CD8-positive, alpha-beta memory T cell (primary cell): ENCODE measurements at regions of chr5 and their contacts with region 1.

Region 1: GRCh38 chr5:148957591-148958202 is 105.2 kb downstream of the SH3TC2 start:
- DNase-seq: peak; percentile 32 to 66 (median 46)
- H3K4me3 ChIP-seq: no peak overlapping the region
- H3K4me3 Mint-ChIP-seq: no peak overlapping the region
- H3K27ac ChIP-seq: no peak overlapping the region
- H3K27ac Mint-ChIP-seq: peak overlapping the region in 3 of 8 donors; percentile 30 to 85 (median 52)
- H3K4me1 ChIP-seq: no peaks in the 10 kb centered on the region
- H3K4me1 Mint-ChIP-seq: peaks cover 5 to 9% (median 8%) of the 10 kb centered on the region in 3 donors
- H3K27me3 ChIP-seq: no peaks in the 10 kb centered on the region
- H3K27me3 Mint-ChIP-seq: no peaks in the 10 kb centered on the region

Region 2: GRCh38 chr5:148641735-148642134 is 316.0 kb before region 1 on chr5:
- CTCF ChIA-PET with region 1: no interaction called
- POLR2A ChIA-PET with region 1: no interaction called
- DNase-seq: no peak
- H3K4me3 ChIP-seq: no peak overlapping the region
- H3K4me3 Mint-ChIP-seq: no peak overlapping the region
- H3K27ac ChIP-seq: no peak overlapping the region
- H3K27ac Mint-ChIP-seq: no peak overlapping the region
- H3K4me1 ChIP-seq: no peaks in the 10 kb centered on the region
- H3K4me1 Mint-ChIP-seq: no peaks in the 10 kb centered on the region
- H3K27me3 ChIP-seq: no peaks in the 10 kb centered on the region
- H3K27me3 Mint-ChIP-seq: peaks cover 6 to 47% of the 10 kb centered on the region in 2 donors

Region 3: DNA sequence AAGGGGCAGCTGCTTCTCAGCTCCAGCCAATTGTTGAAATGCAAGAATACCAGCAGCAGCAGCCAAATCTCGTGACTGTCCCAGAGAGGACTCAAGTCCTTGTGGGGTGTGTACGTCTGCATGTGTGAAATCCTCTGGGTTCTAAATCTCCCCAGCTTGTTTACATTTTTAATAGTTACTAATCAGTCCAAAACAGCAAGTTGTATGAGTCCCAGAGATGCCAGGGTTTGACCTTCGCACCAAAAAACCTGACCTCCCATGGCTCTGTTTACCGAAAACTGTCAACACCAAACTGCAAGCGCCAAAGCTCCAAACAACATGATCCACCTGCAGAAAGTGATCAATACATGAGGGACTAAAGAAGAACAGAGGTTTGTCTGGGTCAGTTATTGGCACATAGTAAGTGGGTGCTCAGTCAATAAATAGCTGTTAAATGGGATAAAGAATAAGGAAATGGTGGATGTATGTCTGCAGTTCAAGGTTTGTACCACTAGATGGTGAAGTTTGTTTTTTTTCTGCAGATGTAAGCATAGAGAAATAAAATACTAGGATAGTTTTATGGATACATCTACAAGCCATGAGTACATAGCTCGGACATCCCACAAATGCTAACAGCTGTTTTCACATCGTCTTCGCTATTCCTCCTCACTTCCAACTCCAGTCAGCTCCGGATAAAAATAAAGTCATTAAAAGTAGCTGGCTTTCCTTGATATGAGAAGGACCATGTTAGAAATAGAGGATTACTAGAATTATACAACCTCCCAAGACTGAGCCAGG is 216.5 kb before region 1 on chr5:
- CTCF ChIA-PET with region 1: interaction called, 71 read pairs
- POLR2A ChIA-PET with region 1: no interaction called
- DNase-seq: peak in 2 of 5 donors; percentile 16 to 27
- H3K4me3 ChIP-seq: no peak overlapping the region
- H3K4me3 Mint-ChIP-seq: no peak overlapping the region
- H3K27ac ChIP-seq: no peak overlapping the region
- H3K27ac Mint-ChIP-seq: no peak overlapping the region
- H3K4me1 ChIP-seq: no peaks in the 10 kb centered on the region
- H3K4me1 Mint-ChIP-seq: no peaks in the 10 kb centered on the region
- H3K27me3 ChIP-seq: no peaks in the 10 kb centered on the region
- H3K27me3 Mint-ChIP-seq: peaks cover 11 to 30% of the 10 kb centered on the region in 2 donors

Region 4: DNA sequence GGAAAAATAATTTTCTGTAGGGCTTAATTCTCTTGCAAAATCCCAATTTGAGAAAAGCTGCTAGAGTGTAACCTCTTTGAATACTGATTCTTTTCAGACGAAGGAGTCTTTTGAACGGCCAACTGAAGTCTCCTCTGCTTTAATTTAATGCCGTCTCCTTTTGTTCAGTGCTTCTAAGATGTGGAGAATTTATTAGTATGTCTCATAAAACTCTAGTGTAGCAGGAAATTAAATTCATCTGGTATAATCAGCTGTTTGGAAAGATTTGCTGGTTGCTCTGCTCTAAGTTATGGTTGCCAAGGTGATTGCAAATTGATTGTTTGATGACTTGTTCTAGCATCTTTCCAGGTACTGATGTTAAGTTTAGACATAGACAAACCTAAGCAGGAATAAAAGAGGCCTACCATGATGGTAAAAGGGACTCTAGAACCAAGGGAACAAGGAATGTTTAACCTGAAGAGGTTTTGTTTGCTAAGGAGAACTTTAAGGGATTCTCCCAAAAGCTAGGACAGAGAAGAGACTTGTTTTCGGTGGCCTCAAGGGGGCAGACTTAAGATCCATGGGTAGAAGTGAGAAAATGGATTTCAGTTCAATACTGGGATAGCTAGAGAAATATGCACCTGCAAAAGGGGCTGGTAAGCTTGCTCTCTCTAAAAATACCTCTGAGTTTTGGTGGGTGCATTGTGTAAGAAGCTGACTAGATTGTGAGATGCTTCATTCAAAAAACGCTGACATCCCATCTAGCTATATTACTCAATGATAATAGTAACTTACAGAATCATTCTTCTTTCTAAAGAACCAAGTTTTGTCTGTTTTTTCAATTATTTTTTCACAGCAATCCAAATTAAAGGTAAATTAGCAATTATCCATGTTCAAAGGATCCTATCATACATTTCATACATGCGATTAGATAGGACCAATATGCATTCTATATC is 137.0 kb before region 1 on chr5:
- CTCF ChIA-PET with region 1: interaction called, 48 read pairs
- POLR2A ChIA-PET with region 1: no interaction called
- DNase-seq: peak in 3 of 5 donors; percentile 24 to 53 (median 31)
- H3K4me3 ChIP-seq: no peak overlapping the region
- H3K4me3 Mint-ChIP-seq: no peak overlapping the region
- H3K27ac ChIP-seq: no peak overlapping the region
- H3K27ac Mint-ChIP-seq: no peak overlapping the region
- H3K4me1 ChIP-seq: no peaks in the 10 kb centered on the region
- H3K4me1 Mint-ChIP-seq: peaks cover 12 to 18% (median 17%) of the 10 kb centered on the region in 3 donors
- H3K27me3 ChIP-seq: no peaks in the 10 kb centered on the region
- H3K27me3 Mint-ChIP-seq: peaks cover 0 to 1% of the 10 kb centered on the region in 2 donors

Region 5: DNA sequence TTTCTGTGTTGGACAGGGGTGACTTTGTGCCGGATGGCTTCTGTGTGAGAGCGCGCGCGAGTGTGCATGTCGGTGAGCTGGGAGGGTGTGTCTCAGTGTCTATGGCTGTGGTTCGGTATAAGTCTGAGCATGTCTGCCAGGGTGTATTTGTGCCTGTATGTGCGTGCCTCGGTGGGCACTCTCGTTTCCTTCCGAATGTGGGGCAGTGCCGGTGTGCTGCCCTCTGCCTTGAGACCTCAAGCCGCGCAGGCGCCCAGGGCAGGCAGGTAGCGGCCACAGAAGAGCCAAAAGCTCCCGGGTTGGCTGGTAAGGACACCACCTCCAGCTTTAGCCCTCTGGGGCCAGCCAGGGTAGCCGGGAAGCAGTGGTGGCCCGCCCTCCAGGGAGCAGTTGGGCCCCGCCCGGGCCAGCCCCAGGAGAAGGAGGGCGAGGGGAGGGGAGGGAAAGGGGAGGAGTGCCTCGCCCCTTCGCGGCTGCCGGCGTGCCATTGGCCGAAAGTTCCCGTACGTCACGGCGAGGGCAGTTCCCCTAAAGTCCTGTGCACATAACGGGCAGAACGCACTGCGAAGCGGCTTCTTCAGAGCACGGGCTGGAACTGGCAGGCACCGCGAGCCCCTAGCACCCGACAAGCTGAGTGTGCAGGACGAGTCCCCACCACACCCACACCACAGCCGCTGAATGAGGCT is 131.5 kb before region 1 on chr5 and contains the start of gene ADRB2:
- CTCF ChIA-PET with region 1: interaction called, 48 read pairs
- POLR2A ChIA-PET with region 1: interaction called, 3 read pairs
- DNase-seq: peak; percentile 82 to 94 (median 90)
- H3K4me3 ChIP-seq: peak within 1 kb of the TSS; percentile 78
- H3K4me3 Mint-ChIP-seq: peak within 1 kb of the TSS; percentile 90 to 99 (median 95)
- H3K27ac ChIP-seq: peak within 1 kb of the TSS; percentile 77
- H3K27ac Mint-ChIP-seq: peak within 1 kb of the TSS; percentile 83 to 99 (median 96)
- H3K4me1 ChIP-seq: peaks cover 11% of the 10 kb centered on the region
- H3K4me1 Mint-ChIP-seq: peaks cover 48 to 59% (median 59%) of the 10 kb centered on the region in 3 donors
- H3K27me3 ChIP-seq: no peaks in the 10 kb centered on the region
- H3K27me3 Mint-ChIP-seq: peaks cover 0 to 2% of the 10 kb centered on the region in 2 donors
- total RNA-seq, gene ADRB2: 1.6 to 2.1 TPM

Region 6: DNA sequence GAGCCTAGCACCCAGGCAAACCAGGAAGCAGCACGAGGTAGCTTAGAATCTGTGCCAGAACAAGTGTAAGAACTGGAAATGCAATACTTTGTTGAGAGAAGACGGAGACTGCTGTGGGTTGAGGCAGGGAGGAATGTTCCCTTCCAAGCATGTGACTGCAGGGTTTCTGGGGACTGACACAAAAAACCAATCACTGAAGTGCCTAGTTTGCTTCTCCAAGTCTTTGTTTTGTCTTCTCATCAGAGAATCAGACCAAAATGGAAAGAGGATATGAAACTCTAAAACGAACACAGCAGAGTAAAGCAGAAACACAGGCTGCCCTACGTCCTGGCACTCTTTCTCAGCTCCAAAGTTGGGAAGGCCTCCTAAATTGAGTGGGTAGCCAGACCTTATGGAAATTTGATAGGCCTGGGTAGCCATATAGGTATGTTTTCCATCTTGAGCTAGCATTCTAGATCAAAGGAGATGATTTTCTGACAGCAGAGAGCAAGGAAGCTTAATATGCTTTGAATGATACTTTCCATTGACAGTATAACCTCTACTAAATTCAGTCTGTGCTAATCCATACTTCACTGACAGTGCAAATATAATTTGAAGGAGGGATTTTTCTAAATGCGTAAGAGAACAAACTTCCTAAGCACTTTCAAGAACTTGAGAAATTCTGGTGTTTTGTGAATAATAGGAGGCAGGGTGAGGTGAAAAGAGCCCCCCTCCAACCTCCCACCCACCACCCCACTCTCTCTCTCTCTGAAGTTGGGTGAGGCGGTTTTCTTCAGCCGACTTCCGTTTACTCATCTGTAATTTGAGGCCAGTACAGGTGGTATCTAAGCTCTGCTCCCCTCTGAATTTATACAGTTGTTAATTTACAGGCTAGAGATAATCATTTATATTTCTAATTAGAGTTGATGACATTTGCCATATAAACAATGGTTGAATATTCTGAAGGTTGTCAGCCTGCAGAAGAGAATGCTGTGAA is 125.8 kb before region 1 on chr5:
- CTCF ChIA-PET with region 1: interaction called, 29 read pairs
- POLR2A ChIA-PET with region 1: interaction called, 3 read pairs
- DNase-seq: no peak
- H3K4me3 ChIP-seq: peak overlapping the region; percentile 78
- H3K4me3 Mint-ChIP-seq: peak overlapping the region; percentile 90 to 99 (median 95)
- H3K27ac ChIP-seq: no peak overlapping the region
- H3K27ac Mint-ChIP-seq: peak overlapping the region; percentile 64 to 93 (median 90)
- H3K4me1 ChIP-seq: peaks cover 22% of the 10 kb centered on the region
- H3K4me1 Mint-ChIP-seq: peaks cover 88 to 98% (median 98%) of the 10 kb centered on the region in 3 donors
- H3K27me3 ChIP-seq: no peaks in the 10 kb centered on the region
- H3K27me3 Mint-ChIP-seq: peaks cover 0 to 2% of the 10 kb centered on the region in 2 donors

Region 7: GRCh38 chr5:148849461-148849860 is 108.2 kb before region 1 on chr5:
- CTCF ChIA-PET with region 1: interaction called, 17 read pairs
- POLR2A ChIA-PET with region 1: interaction called, 3 read pairs
- DNase-seq: peak in 4 of 5 donors; percentile 39 to 78 (median 57)
- H3K4me3 ChIP-seq: peak overlapping the region; percentile 3
- H3K4me3 Mint-ChIP-seq: peak overlapping the region; percentile 66 to 91 (median 84)
- H3K27ac ChIP-seq: peak overlapping the region; percentile 58
- H3K27ac Mint-ChIP-seq: peak overlapping the region; percentile 90 to 99 (median 98)
- H3K4me1 ChIP-seq: peaks cover 94% of the 10 kb centered on the region
- H3K4me1 Mint-ChIP-seq: peaks cover 87 to 97% (median 97%) of the 10 kb centered on the region in 3 donors
- H3K27me3 ChIP-seq: no peaks in the 10 kb centered on the region
- H3K27me3 Mint-ChIP-seq: no peaks in the 10 kb centered on the region